Posterior cingulate gyrus (tissue), 11 donors: ENCODE measurements at regions of chr22 and their contacts with region 1.

Region 1: DNA sequence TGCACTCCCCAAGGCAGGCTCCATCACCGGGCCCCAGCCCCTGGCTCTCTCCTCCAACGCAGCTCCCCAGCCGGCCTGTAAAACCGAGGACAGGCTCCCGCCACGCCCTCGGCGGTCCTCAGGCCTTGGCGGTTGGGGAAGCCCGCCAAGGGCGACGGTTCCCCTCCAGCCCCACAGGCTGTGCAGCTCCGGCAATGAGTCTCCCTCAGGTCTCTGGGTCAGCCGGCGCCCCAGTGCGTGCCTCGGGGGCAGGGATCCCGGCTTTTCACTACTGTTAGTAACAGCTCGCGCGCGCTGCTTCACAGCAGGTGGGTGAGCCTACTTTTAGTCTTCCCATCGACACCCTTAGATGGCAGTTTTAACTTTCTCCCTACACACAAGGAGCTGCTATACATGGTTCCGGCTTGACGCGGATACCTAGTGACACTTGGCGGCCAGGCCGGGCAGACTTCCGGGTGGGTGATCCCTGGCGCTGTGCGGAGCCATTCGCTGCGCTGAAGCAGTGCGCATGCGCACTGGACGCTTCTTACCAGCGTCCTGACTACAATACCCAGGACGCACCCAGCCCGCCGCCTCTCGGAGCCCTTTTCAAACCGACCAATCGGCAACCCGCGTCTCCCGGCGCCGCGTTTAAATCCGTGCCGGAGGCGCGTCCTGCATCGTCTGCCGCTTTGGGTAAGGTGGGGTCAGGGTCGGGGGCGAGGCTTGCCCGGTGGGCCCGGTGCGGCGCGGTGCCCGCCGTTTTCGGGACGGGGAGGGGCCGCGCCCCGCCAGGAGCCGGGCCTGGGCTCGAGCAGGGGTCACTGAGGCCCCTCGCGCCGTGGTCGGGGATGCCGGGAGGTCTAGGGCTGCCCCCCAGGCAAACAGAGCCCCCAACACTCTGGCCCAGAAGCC is at the start of gene GTSE1:
- DNase-seq: peak; percentile 94 to 99 (median 98)

Region 2: DNA sequence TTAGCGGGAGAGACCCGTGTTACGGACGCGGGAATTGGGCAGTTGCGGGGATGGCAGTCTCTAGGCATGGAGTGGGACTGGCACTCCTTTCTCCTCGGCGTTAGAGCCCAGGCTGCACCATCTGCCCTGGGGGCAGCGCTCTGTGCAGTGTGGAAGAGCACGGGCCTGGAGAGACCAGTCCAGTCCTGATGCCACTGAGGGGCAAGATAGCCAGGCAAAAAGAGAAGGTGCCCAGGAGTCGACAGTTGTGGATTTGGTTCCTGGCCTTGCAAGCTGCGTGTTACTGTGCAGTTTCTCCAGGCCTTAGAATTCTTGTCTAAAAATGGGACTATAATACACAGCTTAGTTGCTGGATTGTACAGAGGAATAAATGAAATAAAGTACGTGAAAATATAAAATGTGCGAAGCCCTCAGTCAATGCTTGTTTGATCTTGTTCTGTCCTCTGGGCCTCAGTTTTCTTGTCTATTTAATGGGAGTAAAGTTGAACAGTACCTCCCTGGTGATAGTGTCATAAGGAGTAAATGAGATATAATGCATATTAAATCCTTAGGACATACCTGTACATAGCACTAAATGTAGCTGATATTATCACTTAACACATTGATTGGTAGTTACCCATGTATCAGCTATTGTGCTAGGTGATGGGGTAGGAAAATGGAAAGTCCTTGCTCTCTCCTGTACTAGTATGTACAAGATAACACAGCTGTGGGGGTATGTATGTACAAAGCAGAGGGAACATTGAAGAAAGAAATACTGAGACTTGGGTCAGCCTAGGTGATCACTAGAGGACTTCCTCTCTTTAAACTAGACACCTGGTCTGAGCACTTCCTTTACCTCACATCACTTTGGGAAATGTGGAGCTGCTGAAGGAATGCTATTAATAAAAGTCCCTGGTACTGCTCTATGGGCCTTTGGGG is 623.7 kb before region 1 on chr22:
- intact Hi-C with region 1: no loop called
- DNase-seq: no peak

Region 3: GRCh38 chr22:46122511-46122971 is 174.0 kb before region 1 on chr22:
- intact Hi-C with region 1: loop called (anchors 5 kb)
- DNase-seq: peak in 9 of 10 donors; percentile 64 to 96 (median 77)

Region 4: DNA sequence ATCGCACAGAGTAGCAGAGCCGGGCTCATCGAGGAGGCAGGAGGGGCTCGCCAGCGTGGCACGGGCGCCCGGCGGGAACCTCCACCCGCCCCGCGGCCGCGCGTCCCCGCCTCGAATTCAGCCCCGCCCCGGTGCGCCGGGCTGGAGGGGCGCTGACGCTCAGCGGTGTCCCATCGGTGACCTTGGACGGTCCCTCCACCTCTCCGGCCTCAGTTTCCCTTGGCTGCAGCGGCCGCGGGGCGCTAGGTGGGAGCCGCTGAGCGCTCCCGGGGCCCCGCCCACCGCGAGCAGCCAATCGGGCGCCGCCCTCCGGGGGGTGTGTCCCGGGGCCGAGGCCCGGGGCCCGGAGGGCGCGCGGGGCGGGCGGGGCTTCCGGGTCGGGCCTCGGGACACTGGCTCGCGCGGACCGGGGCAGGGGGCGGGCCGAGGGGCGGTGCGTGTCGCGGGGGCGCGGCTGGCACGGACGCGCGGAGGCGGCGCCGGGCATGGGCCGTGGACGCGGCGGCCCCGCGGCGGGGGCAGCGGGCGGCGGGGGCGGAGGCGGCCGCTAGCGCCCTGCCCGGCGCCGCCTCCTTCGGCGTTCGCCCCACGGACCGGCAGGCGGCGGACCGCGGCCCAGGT is 146.4 kb before region 1 on chr22 and contains the start of gene PPARA:
- intact Hi-C with region 1: loop called (anchors 1 kb)
- DNase-seq: peak; percentile 72 to 98 (median 84)

Region 5: DNA sequence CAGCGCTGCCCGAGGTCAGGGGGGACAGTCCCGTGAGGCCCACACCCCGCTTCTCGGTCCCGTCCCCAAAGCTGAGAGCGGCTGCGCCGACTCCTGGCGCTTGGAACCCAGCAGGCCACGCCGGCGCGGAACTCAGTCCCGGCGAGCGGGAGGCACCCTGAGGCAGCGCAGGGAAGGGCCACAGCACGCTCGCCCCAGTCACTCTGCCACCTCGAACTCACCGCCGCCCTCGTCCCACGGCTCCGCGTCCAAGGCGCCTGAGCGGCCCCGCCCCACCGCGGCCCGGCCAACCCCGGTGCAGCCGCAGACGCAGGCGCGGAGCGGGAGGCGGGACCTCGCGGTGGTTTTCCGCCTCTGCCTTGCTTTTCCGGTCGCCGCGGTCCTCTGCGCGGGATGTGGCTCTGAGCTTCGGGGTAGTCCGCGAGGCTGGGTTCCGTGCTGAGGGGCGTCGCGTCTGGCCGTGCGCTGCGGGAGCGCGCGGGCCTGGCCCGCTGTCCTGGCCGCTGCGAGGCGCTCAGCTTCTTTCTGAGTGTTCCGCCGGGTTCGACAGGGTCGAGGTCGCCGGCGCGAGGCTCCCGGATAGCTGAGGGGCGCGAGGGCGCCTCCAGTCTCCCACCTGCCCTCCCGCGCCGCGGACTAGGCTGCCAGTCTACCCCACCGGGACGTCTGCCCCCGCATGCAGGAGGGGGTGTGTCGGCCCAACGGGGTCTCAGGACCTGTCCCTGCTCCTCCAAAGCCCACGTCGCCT is 46.3 kb before region 1 on chr22 and contains the start of gene CDPF1:
- intact Hi-C with region 1: loop called (anchors 1 kb)
- DNase-seq: peak; percentile 87 to 99 (median 92)

Region 6: GRCh38 chr22:46329616-46330015 is 33.1 kb after region 1 on chr22:
- intact Hi-C with region 1: loop called (anchors 5 kb)
- DNase-seq: peak in 3 of 10 donors; percentile 24 to 76 (median 55)